ENCODE measurements at regions of chr5 and their contacts with region 1.

Region 1: GRCh38 chr5:23314827-23315226 is 192.6 kb upstream of the PRDM9 start:
- DNase-seq: no peak
- ATAC-seq: no peak
- H3K4me3 Mint-ChIP-seq: no peak overlapping the region
- H3K27ac Mint-ChIP-seq: no peak overlapping the region
- H3K4me1 Mint-ChIP-seq: no peaks in the 10 kb centered on the region
- H3K27me3 Mint-ChIP-seq: no peaks in the 10 kb centered on the region
- CTCF ChIP-seq: no peak

Region 2: DNA sequence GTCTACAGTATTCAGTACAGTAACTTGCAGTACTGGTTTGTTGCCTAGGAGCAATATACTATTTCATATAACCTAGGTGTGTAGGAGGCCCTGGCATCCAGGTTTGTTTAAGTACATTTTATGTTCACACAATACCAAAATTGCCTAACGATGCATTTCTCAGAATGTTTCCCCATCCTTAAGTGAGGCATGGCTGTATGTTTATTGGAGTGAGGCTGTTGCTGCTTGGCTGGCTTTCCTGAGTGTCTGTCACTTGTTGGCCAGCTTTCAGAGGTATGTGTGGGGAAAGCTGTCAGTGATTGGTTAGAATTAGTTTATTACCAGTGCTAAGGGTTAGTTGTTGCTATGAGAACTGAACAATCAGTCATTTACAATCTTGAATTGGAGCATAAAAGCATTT is 307.6 kb before region 1 on chr5:
- CTCF ChIA-PET with region 1: no interaction called
- POLR2A ChIA-PET with region 1: no interaction called
- intact Hi-C with region 1: no loop called
- DNase-seq: no peak
- ATAC-seq: no peak
- H3K4me3 Mint-ChIP-seq: no peak overlapping the region
- H3K27ac Mint-ChIP-seq: no peak overlapping the region
- H3K4me1 Mint-ChIP-seq: no peaks in the 10 kb centered on the region
- H3K27me3 Mint-ChIP-seq: no peaks in the 10 kb centered on the region
- CTCF ChIP-seq: no peak

Region 3: GRCh38 chr5:23303433-23303832 is 11.4 kb before region 1 on chr5:
- CTCF ChIA-PET with region 1: no interaction called
- POLR2A ChIA-PET with region 1: no interaction called
- intact Hi-C with region 1: loop called (anchors 1 kb)
- DNase-seq: no peak
- ATAC-seq: no peak
- H3K4me3 Mint-ChIP-seq: no peak overlapping the region
- H3K27ac Mint-ChIP-seq: no peak overlapping the region
- H3K4me1 Mint-ChIP-seq: no peaks in the 10 kb centered on the region
- H3K27me3 Mint-ChIP-seq: no peaks in the 10 kb centered on the region
- CTCF ChIP-seq: no peak